Ascending aorta (tissue), 2 donors: ENCODE measurements at regions of chr13 and their contacts with region 1.

Region 1: GRCh38 chr13:24020375-24020830 is 123.1 kb upstream of the C1QTNF9B start:
- DNase-seq: peak in 1 of 2 donors; percentile 71
- H3K4me3 ChIP-seq: no peak overlapping the region
- H3K27ac ChIP-seq: no peak overlapping the region
- H3K4me1 ChIP-seq: no peaks in the 10 kb centered on the region
- H3K27me3 ChIP-seq: no peaks in the 10 kb centered on the region
- CTCF ChIP-seq: peak; percentile 63 to 76 (median 76)

Region 2: DNA sequence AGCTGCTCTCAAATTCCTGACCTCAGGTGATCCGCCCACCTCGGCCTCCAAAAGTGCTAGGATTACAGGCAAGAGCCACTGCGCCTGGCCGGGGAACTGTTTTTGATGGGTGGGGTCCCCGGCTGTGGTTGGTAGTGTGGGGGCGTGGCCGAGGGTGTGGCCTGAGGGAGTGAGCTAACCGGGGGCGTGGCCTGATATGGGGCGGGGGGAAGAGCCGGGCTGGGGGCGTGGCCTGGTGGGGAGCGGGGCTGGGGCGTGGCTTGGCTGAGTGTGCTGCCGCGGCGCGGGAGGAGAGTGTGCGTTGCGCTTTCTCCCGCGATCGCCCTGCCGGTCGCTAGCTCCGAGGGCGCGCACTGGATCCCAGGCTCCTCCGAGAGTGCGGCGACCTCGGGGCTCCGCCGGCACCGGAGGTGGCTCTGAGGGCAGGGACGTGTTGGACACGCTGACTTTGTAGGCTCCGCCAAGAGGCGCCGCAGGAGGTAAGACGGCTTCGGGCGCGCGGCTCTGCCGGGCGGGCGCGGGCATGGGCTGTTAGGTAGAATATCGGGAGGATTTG is 140.1 kb after region 1 on chr13 and contains the start of gene SPATA13:
- intact Hi-C with region 1: loop called (anchors 2 kb)
- DNase-seq: peak; percentile 63 to 94
- H3K4me3 ChIP-seq: peak within 1 kb of the TSS; percentile 61 to 89
- H3K27ac ChIP-seq: peak within 1 kb of the TSS in 1 of 2 donors; percentile 41
- H3K4me1 ChIP-seq: no peaks in the 10 kb centered on the region
- H3K27me3 ChIP-seq: no peaks in the 10 kb centered on the region
- CTCF ChIP-seq: no peak
- total RNA-seq, gene SPATA13: 38.2 TPM

Region 3: GRCh38 chr13:24220086-24220703 is 199.8 kb after region 1 on chr13:
- intact Hi-C with region 1: loop called (anchors 1 kb)
- DNase-seq: peak in 1 of 2 donors; percentile 78
- H3K4me3 ChIP-seq: no peak overlapping the region
- H3K27ac ChIP-seq: no peak overlapping the region
- H3K4me1 ChIP-seq: peaks cover 0 to 3% of the 10 kb centered on the region in 2 donors
- H3K27me3 ChIP-seq: no peaks in the 10 kb centered on the region
- CTCF ChIP-seq: peak; percentile 70 to 76 (median 71)

Region 4: GRCh38 chr13:24228852-24229458 is 208.6 kb after region 1 on chr13:
- intact Hi-C with region 1: loop called (anchors 2 kb)
- DNase-seq: no peak
- H3K4me3 ChIP-seq: no peak overlapping the region
- H3K27ac ChIP-seq: no peak overlapping the region
- H3K4me1 ChIP-seq: no peaks in the 10 kb centered on the region
- H3K27me3 ChIP-seq: no peaks in the 10 kb centered on the region
- CTCF ChIP-seq: peak in 2 of 3 experiments; percentile 77 to 80